Left cardiac atrium (tissue), 4 donors: ENCODE measurements at regions of chr2 and their contacts with region 1.

Region 1: DNA sequence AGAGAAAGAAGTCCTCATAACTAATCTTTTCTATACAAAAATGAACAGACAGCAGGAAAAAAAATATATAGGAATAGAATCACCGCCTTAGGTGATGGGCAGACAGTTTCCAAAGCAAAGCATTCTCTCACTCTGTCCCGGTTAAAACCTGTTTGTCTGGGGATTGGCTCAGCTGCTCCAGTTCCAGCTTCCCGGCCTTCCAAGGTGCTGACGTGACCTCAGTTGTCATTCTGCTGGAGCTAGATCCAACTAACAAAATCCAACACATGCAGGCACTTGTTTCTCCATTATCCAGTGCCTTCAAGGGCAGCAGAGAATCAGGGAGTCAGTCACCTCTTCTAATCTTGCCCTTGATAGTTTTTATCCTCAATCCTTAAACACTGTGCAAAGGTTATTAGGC is 52.8 kb downstream of the IKZF2 start:
- DNase-seq: no peak
- ATAC-seq: peak; percentile 38 to 71

Region 2: DNA sequence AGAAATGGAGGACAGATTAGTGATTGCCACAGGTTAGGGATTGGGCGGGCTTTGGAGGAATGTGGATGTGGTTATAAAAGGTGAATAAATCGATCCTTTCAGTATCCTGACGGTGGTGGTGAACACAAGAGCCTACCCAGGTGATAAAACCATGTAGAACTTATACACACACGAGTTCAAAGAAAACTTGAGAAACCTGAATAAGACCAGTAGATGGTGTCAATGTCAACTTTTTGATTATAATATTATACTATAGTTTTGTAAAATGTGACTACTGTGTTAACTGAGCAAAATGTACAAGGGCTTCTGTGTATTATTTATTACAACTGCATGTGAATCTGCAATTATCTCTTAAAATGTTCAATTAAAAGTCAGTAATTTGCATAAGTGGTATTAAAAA is 696.3 kb before region 1 on chr2:
- intact Hi-C with region 1: loop called in 1 of 2 experiments (anchors 10 kb)
- DNase-seq: no peak
- ATAC-seq: no peak

Region 3: DNA sequence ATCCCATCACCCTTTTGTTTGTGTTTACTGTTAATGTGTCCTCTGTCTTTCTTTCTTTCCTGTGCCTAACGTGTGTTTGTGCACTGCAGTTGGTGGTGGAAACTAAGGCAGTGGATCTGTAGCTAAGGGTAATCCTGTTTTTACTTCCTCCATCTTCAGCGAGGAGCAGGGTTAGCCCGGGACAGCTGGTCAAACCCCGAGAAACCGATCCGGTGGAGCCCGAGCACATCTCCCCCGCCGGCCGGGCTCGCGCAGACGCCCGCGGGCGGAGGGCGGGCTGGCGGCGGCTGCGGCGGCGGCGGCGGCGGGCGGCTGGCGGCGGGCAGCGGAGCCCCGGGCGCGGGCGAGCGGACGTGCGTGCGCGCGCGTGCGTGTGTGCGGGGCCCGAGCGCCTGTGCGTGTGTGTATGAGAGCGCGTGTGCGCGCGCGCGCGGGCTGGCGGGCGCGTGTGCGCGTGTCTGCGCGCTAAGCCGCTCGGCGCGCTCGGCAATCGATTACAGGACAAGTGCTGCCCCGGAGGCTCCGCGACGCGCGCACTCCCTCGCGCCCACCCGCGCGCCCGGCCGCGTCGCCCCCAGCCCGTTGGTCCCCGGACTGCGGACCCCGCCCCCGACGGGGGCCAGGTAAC is 52.9 kb after region 1 on chr2 and contains the start of gene IKZF2:
- intact Hi-C with region 1: no loop called
- DNase-seq: peak; percentile 90
- ATAC-seq: peak; percentile 96
- total RNA-seq, gene IKZF2: 3.8 to 6.3 TPM

Region 4: GRCh38 chr2:213353419-213353818 is 254.8 kb after region 1 on chr2:
- intact Hi-C with region 1: no loop called
- DNase-seq: no peak
- ATAC-seq: no peak